OCI-LY7 (cell line): ENCODE measurements at regions of chr2 and their contacts with region 1.

Region 1: DNA sequence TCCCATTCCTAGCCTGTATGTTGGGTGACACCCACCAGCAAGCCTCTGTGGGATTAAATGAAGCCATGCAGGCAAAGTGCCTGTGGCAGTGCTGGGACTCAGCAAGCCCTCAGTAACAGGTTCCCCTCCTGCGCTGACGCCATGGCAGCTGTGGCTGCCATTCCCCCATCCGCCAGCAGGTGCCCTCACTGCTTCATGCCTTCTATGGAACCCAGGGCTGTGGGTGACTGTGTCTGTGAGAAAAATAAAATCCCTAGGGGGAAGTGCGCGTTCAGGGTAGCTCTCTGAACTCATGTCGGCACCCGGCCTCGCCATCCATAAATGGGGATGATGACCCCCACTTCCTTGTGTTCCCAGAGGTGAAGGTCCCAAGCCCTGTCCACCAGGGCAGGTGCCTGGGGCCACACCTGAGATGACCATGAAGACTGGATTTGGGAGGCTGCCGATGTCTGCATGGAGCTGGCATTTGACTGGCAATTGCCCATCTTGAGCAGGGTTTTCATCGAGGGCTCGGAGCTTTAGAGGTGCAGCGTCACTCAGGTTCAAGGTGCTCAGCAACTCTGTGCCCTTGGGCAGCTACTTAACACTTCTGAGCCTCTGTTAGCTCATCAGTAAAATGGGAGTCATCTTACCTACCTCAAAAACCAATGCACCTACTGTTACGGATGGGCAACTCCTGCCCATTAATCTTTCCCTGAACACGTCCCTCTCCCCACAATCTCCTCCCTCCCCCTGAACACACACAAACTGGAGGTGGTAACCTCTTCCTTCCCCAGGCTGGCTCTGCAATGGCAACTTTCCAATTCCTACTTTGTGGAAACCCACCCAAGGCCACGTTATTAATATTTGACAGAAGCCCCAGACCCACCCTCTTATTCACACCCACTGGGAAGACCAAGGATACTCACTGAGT is 2.9 kb upstream of the MAL start:
- DNase-seq: peak; percentile 64
- H3K4me3 ChIP-seq: no peak overlapping the region
- H3K27ac ChIP-seq: no peak overlapping the region
- H3K4me1 ChIP-seq: no peaks in the 10 kb centered on the region
- CTCF ChIP-seq: peak; percentile 88

Region 2: GRCh38 chr2:95076784-95077529 is 54.4 kb after region 1 on chr2:
- CTCF ChIA-PET with region 1: interaction called, 3 read pairs
- POLR2A ChIA-PET with region 1: no interaction called
- intact Hi-C with region 1: loop called (anchors 1 kb)
- DNase-seq: peak; percentile 69
- H3K4me3 ChIP-seq: no peak overlapping the region
- H3K27ac ChIP-seq: no peak overlapping the region
- H3K4me1 ChIP-seq: peaks cover 16% of the 10 kb centered on the region
- CTCF ChIP-seq: peak; percentile 81

Region 3: DNA sequence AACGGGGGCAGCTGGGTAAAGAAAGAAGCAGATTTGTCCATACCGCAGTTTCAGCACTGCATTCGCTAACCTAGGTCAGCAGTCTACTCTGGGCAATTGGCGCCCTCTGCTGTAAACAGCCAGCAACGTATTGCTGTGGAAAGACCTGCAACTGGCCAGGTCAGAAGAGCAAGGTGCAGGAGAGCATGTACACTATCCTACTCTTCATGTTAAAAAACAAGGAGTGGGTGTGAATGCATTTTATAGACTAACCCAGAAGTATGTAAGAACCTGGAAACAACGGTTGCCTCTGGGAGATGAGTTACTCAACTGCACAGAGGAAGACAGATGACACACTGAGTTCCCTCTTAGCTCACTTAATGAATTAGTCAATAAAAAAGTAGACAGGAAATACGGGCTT is 92.9 kb after region 1 on chr2:
- CTCF ChIA-PET with region 1: no interaction called
- POLR2A ChIA-PET with region 1: no interaction called
- intact Hi-C with region 1: loop called (anchors 5 kb)
- DNase-seq: peak; percentile 57
- H3K4me3 ChIP-seq: no peak overlapping the region
- H3K27ac ChIP-seq: no peak overlapping the region
- H3K4me1 ChIP-seq: peaks cover 16% of the 10 kb centered on the region
- CTCF ChIP-seq: peak; percentile 82

Region 4: DNA sequence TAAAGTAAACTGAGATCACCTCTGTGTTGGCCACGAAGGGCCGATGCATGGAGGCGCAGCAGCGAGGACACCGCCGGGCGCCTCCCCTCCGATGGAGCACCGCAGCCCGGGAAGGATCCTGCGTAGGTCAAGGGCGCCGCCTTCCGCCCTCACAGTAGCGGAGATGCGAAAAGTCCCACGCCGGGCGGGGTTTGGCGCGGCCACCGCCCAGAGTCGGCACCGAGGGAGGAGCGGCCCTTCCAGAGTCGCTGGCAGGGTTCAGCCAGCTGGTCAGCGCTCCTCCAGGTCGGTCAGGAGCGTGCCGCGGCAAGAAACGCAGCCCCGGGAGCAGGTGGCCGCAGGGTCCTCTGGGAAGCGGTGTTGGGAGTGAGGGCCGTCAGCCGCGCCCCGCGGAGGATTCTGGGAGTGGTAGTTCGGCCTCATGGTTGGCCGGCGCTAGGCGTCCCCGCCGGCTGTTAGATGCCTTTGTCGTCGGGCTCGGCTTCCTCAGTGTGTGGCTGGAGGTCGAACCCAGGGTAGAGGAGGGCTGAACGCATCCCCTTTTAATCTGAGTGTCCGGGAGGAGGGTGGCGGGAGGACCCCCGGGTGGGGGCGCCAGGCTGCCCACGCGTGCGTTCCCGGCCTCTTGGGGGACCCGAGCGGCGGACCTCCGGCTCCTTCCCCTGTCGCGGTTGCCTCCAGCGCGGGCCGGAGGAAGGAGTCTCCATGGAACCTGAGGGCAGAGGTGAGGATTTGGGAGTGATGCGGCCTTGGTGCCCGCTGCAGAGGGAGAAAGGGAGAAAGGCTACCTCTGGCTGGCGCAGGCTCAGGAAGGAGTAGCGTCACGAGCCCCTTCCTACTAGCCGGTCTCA is 184.8 kb after region 1 on chr2 and contains the start of gene ZNF892:
- CTCF ChIA-PET with region 1: no interaction called
- POLR2A ChIA-PET with region 1: no interaction called
- intact Hi-C with region 1: loop called (anchors 1 kb)
- DNase-seq: peak; percentile 88
- H3K4me3 ChIP-seq: peak within 1 kb of the TSS; percentile 83
- H3K27ac ChIP-seq: peak within 1 kb of the TSS; percentile 32
- H3K4me1 ChIP-seq: peaks cover 4% of the 10 kb centered on the region
- CTCF ChIP-seq: peak; percentile 63
- total RNA-seq, gene ZNF892: 3.1 and 4.7 TPM in 2 replicates